ENCODE measurements at regions of chr2 and their contacts with region 1.

Region 1: GRCh38 chr2:157420771-157421323 is 23.0 kb downstream of the CYTIP start:
- DNase-seq: no peak
- H3K4me3 Mint-ChIP-seq: peak overlapping the region; percentile 56
- H3K27ac Mint-ChIP-seq: peak overlapping the region; percentile 95
- H3K4me1 Mint-ChIP-seq: peaks cover 67% of the 10 kb centered on the region
- H3K27me3 Mint-ChIP-seq: no peaks in the 10 kb centered on the region

Region 2: DNA sequence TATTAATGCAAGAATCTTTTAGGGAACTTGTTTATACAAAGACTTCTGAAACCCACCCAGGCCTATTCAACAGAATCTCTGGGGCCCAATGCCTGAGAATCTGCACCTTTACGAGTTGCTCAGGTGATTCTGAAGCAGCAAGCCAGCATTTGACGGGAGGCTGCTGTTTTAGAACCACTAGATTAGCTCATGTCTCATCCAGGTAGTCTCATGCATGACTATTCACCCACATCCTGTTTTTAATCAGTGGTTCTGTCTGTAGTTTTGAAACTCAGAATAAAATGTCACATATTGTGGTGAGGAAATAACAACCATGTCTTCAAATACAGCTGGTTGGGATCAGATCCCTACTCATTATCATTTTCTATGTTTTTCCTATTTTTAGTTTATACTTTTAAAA is 16.5 kb before region 1 on chr2:
- intact Hi-C with region 1: loop called (anchors 2 kb)
- DNase-seq: peak; percentile 61
- H3K4me3 Mint-ChIP-seq: no peak overlapping the region
- H3K27ac Mint-ChIP-seq: peak overlapping the region; percentile 44
- H3K4me1 Mint-ChIP-seq: peaks cover 55% of the 10 kb centered on the region
- H3K27me3 Mint-ChIP-seq: no peaks in the 10 kb centered on the region

Region 3: DNA sequence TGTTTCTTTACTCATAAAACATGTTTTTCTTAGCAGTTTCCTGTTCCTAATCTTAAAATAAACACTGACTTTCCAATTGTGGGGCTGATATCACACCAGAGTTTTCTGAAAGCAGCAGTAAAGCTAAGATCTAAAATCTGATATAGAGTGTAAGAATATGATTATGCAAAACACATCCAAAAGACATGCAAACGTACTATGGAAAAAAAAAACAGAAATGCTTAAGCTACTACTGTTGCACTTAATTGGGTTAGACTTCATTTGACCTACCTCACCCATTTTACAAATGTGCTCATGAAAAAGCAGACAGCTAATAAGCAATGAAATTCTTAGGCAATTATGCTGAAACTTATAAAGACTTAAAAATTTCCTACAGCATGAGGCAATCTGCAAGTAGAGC is 12.5 kb after region 1 on chr2:
- intact Hi-C with region 1: loop called (anchors 1 kb)
- DNase-seq: no peak
- H3K4me3 Mint-ChIP-seq: peak overlapping the region; percentile 81
- H3K27ac Mint-ChIP-seq: peak overlapping the region; percentile 87
- H3K4me1 Mint-ChIP-seq: peaks cover 81% of the 10 kb centered on the region
- H3K27me3 Mint-ChIP-seq: no peaks in the 10 kb centered on the region

Region 4: DNA sequence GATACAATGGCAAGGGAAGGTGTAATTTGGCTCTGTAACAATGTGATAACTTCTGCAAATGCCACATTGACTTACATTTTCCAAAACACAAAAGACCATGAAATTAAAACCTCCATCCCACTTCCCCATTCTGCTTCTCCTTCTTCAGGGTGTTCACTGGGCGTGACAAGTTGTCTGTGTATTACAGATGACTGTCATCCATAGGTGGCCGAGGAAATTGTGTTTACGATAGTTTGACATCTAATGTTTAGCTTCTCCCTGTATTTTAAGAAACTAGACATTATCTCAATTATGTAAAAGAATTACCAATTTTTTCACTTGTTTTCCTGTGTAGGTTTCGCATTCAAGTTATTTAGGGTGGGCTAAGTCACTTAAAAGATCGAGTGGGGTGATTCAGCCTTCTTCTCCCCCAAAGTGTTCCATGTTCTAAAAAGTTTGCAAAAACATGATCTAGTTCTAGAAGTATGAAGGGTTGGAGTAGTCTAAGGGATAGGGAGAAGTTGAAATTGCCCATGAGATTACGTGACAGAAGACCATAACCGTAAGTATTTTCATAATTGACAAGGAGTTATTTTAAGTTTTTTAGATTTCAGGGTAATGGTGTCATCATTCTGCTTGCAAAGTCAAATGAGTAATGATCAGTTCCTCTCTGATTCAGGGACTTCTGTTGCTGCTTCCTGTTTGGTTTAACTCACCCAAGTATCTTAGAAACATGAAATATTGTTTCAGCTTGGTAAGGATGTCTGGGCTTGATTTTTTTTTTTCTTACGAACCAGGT is 48.3 kb after region 1 on chr2:
- intact Hi-C with region 1: loop called (anchors 1 kb)
- DNase-seq: no peak
- H3K4me3 Mint-ChIP-seq: peak overlapping the region; percentile 69
- H3K27ac Mint-ChIP-seq: peak overlapping the region; percentile 96
- H3K4me1 Mint-ChIP-seq: peaks cover 86% of the 10 kb centered on the region
- H3K27me3 Mint-ChIP-seq: no peaks in the 10 kb centered on the region

Region 5: DNA sequence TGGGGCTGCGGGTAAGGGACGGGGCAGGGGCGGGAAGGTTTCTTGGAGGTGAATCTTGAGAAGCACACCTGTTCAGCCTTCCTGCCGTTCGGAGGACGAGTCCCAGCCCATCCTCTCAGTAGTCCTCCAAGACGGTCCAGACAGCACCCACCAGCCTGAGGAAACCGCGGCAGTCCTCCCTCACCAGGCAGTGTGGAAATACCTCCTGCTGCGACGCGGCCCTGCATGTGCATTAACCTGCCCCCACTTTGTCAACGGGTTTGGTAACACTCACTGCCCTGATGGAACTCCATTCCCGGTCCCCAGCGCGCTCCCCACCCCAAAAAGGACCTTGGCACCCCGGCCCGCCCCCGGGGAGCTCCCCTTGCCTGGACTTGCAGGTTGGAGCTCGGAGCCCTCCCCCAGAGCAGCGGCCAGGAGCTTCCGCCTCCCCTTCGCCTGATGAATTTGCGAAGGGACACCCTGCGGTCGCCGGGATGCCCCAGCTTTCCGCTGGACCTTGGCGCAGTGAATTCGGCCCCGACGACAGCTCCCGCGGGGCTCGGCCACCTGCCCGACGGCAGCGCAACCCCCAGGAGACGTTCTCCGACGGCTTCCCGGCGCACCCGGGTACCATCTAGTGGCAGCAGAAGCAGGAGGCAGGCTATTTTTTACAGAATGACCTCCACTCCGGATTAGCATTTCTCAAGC is 176.3 kb after region 1 on chr2:
- intact Hi-C with region 1: loop called (anchors 10 kb)
- DNase-seq: peak; percentile 20
- H3K4me3 Mint-ChIP-seq: peak overlapping the region; percentile 39
- H3K27ac Mint-ChIP-seq: no peak overlapping the region
- H3K4me1 Mint-ChIP-seq: peaks cover 6% of the 10 kb centered on the region
- H3K27me3 Mint-ChIP-seq: peaks cover 47% of the 10 kb centered on the region

Region 6: GRCh38 chr2:157825885-157826284 is 405.0 kb after region 1 on chr2:
- intact Hi-C with region 1: no loop called
- DNase-seq: no peak
- H3K4me3 Mint-ChIP-seq: no peak overlapping the region
- H3K27ac Mint-ChIP-seq: no peak overlapping the region
- H3K4me1 Mint-ChIP-seq: peaks cover 8% of the 10 kb centered on the region
- H3K27me3 Mint-ChIP-seq: no peaks in the 10 kb centered on the region

Measured in activated T-helper 2 cell treated with anti-CD3 and anti-CD28 coated beads, Interferon-gamma antibody, Interleukin-2, Interleukin-4, amounts not matched to agents 10 μg/mL and 5 μg/mL and 100 μg/mL, durations not matched to agents 14 hours and 24 hours and 36 hours (primary cell).